Motor neuron (in vitro differentiated cells): ENCODE measurements at regions of chr2 and their contacts with region 1.

Region 1: DNA sequence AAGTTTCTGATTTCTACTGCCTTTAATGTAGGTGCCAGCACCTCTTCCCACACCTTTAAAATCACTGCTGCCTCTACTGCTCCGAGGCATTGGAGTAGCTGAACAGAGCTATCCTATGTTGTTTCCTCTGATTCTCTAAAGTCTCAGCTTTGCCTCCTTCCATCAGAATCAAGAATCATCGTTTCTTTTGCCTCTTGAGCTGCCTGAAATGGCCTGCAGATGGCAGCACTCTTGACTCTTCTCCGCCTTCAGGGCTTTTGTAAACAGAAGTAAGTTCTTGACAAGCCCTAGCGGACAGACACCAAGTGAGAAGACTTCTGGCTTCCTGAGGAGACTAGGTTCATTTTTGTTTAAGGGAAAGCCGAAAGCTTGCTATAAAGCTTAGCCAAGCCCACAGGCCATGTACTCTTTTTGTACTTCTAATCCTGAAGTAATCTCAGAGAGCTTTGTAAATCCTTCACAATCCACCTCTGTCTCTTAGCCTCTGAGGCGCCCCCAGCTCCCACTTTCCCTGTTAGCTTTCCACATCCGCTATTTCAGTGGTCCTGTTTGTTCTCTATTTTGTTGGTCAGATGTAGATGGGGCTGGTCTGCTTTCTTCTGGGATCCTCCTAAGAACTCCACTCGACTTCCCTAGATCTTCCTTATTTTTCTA is 48.4 kb downstream of the GTF3C3 start:
- ATAC-seq: peak in 4 of 8 experiments; percentile 30 to 99 (median 84)
- H3K4me3 ChIP-seq: no peak overlapping the region
- H3K27ac ChIP-seq: no peak overlapping the region
- H3K4me1 ChIP-seq: no peaks in the 10 kb centered on the region

Region 2: DNA sequence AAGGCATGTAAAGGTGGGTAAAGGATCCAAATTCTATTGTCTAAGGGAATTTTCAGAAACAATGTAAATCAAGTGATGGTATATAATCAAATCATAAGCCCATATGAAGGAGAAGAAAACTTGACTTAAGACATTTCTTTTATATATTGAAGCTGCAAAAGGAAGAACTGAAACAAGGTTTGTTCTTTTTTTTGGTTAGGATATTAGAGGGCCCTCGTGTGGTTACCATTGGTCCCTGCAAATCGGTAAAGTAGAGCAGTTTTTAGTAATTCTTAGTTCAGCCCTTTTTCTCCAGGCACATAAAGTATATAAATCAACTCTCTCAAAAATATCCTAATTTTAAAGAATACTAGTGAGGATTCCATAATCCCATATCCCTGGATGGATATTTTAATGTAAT is 474.1 kb before region 1 on chr2:
- in situ Hi-C with region 1: loop called in 3 of 9 experiments (anchors 25 kb)
- ATAC-seq: no peak
- H3K4me3 ChIP-seq: no peak overlapping the region
- H3K27ac ChIP-seq: no peak overlapping the region
- H3K4me1 ChIP-seq: peaks cover 14 to 16% of the 10 kb centered on the region in 2 donors

Region 3: GRCh38 chr2:196322973-196323810 is 427.9 kb before region 1 on chr2:
- in situ Hi-C with region 1: loop called in 2 of 9 experiments (anchors 25 kb)
- ATAC-seq: no peak
- H3K4me3 ChIP-seq: no peak overlapping the region
- H3K27ac ChIP-seq: no peak overlapping the region
- H3K4me1 ChIP-seq: no peaks in the 10 kb centered on the region

Region 4: GRCh38 chr2:196337208-196337953 is 413.7 kb before region 1 on chr2:
- in situ Hi-C with region 1: loop called in 1 of 9 experiments (anchors 25 kb)
- ATAC-seq: no peak
- H3K4me3 ChIP-seq: no peak overlapping the region
- H3K27ac ChIP-seq: no peak overlapping the region
- H3K4me1 ChIP-seq: no peaks in the 10 kb centered on the region

Region 5: GRCh38 chr2:196453613-196454047 is 297.5 kb before region 1 on chr2:
- in situ Hi-C with region 1: loop called in 1 of 9 experiments (anchors 25 kb)
- ATAC-seq: peak in 3 of 8 experiments; percentile 64 to 72 (median 67)
- H3K4me3 ChIP-seq: no peak overlapping the region
- H3K27ac ChIP-seq: no peak overlapping the region
- H3K4me1 ChIP-seq: no peaks in the 10 kb centered on the region

Region 6: GRCh38 chr2:196823750-196824522 is 72.8 kb after region 1 on chr2:
- in situ Hi-C with region 1: no loop called
- ATAC-seq: peak in 3 of 8 experiments; percentile 78 to 92 (median 79)
- H3K4me3 ChIP-seq: no peak overlapping the region
- H3K27ac ChIP-seq: no peak overlapping the region
- H3K4me1 ChIP-seq: no peaks in the 10 kb centered on the region

Region 7: GRCh38 chr2:196849895-196850294 is 98.8 kb after region 1 on chr2:
- in situ Hi-C with region 1: no loop called
- ATAC-seq: peak in 5 of 8 experiments; percentile 46 to 80 (median 76)
- H3K4me3 ChIP-seq: no peak overlapping the region
- H3K27ac ChIP-seq: no peak overlapping the region
- H3K4me1 ChIP-seq: no peaks in the 10 kb centered on the region